ENCODE measurements at regions of chr2 and their contacts with region 1.

Region 1: GRCh38 chr2:65040400-65041261 is 15.6 kb upstream of the CEP68 start:
- DNase-seq: peak; percentile 71
- H3K4me3 ChIP-seq: no peak overlapping the region
- CTCF ChIP-seq: peak; percentile 95

Region 2: GRCh38 chr2:64945973-64946768 is 94.5 kb before region 1 on chr2:
- in situ Hi-C with region 1: loop called (anchors 25 kb)
- DNase-seq: no peak
- H3K4me3 ChIP-seq: no peak overlapping the region
- CTCF ChIP-seq: no peak

Region 3: GRCh38 chr2:64978514-64979268 is 61.9 kb before region 1 on chr2:
- in situ Hi-C with region 1: no loop called
- DNase-seq: no peak
- H3K4me3 ChIP-seq: no peak overlapping the region
- CTCF ChIP-seq: no peak

Region 4: DNA sequence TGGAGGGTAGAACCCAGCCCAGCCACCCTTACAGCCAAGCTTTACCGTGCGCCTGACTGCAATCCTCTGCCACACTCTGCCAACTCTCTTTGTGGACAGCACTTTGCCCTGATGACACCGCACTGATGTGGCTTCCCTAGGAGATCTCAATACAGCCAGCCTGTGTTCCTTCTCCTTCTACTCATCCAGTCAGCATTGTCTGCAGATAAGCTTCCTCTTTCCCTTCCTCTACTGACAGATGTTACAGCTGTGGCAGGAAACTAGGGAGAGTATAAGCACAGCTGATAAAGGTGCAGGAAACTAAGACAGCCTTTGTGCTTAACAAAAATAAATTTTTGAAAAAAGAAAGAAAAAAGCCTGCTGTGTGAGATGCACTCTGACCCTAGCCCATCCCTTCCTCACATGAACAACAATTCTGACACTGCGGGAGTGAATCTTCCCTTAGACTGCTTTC is 40.6 kb after region 1 on chr2:
- in situ Hi-C with region 1: no loop called
- DNase-seq: no peak
- H3K4me3 ChIP-seq: no peak overlapping the region
- CTCF ChIP-seq: no peak